CD8-positive, alpha-beta T cell (primary cell): ENCODE measurements at regions of chr7 and their contacts with region 1.

Region 1: GRCh38 chr7:108613112-108613759 is 43.6 kb downstream of the DNAJB9 start:
- DNase-seq: peak in 2 of 9 experiments; percentile 53 to 59
- ATAC-seq: peak; percentile 48
- H3K4me3 ChIP-seq: no peak overlapping the region
- H3K4me3 Mint-ChIP-seq: no peak overlapping the region
- H3K27ac ChIP-seq: no peak overlapping the region
- H3K27ac Mint-ChIP-seq: no peak overlapping the region
- H3K4me1 ChIP-seq: no peaks in the 10 kb centered on the region
- H3K4me1 Mint-ChIP-seq: no peaks in the 10 kb centered on the region
- H3K27me3 ChIP-seq: no peaks in the 10 kb centered on the region
- H3K27me3 Mint-ChIP-seq: no peaks in the 10 kb centered on the region
- CTCF ChIP-seq: peak; percentile 91

Region 2: GRCh38 chr7:108171151-108171550 is 442.1 kb before region 1 on chr7:
- CTCF ChIA-PET with region 1: no interaction called
- POLR2A ChIA-PET with region 1: no interaction called
- intact Hi-C with region 1: loop called in 1 of 2 experiments (anchors 5 kb)
- DNase-seq: no peak
- ATAC-seq: no peak
- H3K4me3 ChIP-seq: no peak overlapping the region
- H3K4me3 Mint-ChIP-seq: no peak overlapping the region
- H3K27ac ChIP-seq: no peak overlapping the region
- H3K27ac Mint-ChIP-seq: no peak overlapping the region
- H3K4me1 ChIP-seq: no peaks in the 10 kb centered on the region
- H3K4me1 Mint-ChIP-seq: no peaks in the 10 kb centered on the region
- H3K27me3 ChIP-seq: no peaks in the 10 kb centered on the region
- H3K27me3 Mint-ChIP-seq: peaks cover 2% of the 10 kb centered on the region
- CTCF ChIP-seq: no peak

Region 3: DNA sequence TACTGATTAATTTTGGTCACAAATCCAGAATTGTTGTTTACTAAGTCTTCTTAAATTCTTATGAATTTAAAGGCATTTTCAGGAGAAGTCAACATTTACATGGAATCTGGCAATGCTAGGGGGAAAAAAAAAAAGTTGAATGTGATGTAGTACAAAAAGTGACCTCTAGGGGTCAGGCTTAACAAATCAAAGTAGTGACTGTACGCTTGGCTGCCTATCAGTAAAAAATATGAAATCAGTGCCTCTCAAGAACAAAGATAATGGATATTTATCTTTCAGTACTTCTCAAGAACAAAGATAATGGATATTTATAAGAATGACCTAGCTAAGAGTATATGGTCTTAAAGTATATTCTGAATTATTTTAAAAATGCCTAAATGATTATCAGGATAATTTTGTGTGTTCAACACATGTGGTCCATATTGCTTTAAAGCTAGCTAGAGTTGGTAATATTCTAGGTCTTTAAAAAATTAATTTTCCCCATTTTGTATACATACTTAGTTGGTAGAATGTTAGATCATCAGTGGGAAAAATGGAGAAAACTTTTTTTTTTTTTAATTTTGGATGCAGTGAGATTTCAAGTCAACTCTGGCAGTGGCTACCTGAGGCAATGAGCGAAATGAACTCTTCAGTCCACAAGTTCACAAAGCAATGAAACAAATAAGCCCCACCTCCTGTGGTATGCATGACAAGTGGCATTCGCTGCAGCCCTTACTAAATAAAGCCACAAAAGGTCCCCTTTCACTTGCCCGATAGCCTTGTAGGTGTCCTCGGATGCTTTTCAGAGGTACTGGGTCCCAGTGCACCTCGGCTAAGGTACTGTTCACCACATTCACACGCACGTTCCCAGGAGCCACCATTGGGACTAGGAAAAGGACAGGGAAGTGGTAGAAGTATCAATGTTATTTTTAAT is 431.9 kb before region 1 on chr7:
- CTCF ChIA-PET with region 1: no interaction called
- POLR2A ChIA-PET with region 1: no interaction called
- intact Hi-C with region 1: loop called in 1 of 2 experiments (anchors 10 kb)
- DNase-seq: peak in 2 of 9 experiments; percentile 51 to 66
- ATAC-seq: peak; percentile 59
- H3K4me3 ChIP-seq: no peak overlapping the region
- H3K4me3 Mint-ChIP-seq: no peak overlapping the region
- H3K27ac ChIP-seq: no peak overlapping the region
- H3K27ac Mint-ChIP-seq: no peak overlapping the region
- H3K4me1 ChIP-seq: no peaks in the 10 kb centered on the region
- H3K4me1 Mint-ChIP-seq: no peaks in the 10 kb centered on the region
- H3K27me3 ChIP-seq: no peaks in the 10 kb centered on the region
- H3K27me3 Mint-ChIP-seq: no peaks in the 10 kb centered on the region
- CTCF ChIP-seq: peak; percentile 94

Region 4: DNA sequence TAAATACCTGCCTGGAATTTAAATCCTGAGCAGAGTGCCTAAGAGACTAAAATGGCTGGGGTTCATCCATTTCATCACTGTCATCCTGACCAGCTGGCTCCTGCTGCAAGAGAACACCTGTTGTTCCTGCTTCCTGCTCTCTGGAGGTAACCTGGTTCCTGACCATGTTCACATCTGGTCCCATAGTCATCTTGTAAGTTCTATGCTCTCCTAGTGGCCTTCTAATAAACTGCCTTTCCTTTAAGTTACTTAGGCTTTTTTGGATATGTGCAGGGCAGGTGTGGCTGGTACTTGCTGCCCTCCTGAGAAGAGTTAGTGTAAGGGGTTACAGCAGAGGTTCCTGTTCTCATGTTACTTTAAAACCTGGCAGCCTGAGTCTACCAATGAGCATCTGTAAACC is 237.0 kb before region 1 on chr7:
- CTCF ChIA-PET with region 1: no interaction called
- POLR2A ChIA-PET with region 1: no interaction called
- intact Hi-C with region 1: loop called in 1 of 2 experiments (anchors 5 kb)
- DNase-seq: no peak
- ATAC-seq: no peak
- H3K4me3 ChIP-seq: no peak overlapping the region
- H3K4me3 Mint-ChIP-seq: no peak overlapping the region
- H3K27ac ChIP-seq: no peak overlapping the region
- H3K27ac Mint-ChIP-seq: no peak overlapping the region
- H3K4me1 ChIP-seq: no peaks in the 10 kb centered on the region
- H3K4me1 Mint-ChIP-seq: peaks cover 4% of the 10 kb centered on the region
- H3K27me3 ChIP-seq: no peaks in the 10 kb centered on the region
- H3K27me3 Mint-ChIP-seq: no peaks in the 10 kb centered on the region
- CTCF ChIP-seq: no peak

Region 5: DNA sequence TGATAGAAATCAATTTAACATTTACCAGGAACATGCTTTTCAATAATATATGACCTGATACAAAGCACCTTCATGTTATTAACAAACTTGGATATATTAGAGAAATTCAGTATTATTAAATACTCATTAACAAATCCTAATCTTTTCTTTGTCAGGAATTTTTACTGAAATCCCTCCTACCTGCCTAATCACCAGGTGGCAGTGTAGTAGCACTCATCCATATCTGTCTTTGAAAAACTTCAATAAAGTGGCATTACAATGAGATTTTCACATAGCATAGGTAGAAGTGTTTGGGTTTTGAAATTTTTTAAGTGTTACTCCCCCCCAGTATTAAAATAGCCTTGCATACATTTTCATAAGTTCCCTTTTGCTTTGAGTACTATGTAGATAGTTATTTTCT is 1231.1 kb after region 1 on chr7:
- CTCF ChIA-PET with region 1: no interaction called
- POLR2A ChIA-PET with region 1: no interaction called
- intact Hi-C with region 1: loop called in 1 of 2 experiments (anchors 5 kb)
- DNase-seq: peak in 2 of 9 experiments; percentile 4 to 40
- ATAC-seq: no peak
- H3K4me3 ChIP-seq: no peak overlapping the region
- H3K4me3 Mint-ChIP-seq: no peak overlapping the region
- H3K27ac ChIP-seq: no peak overlapping the region
- H3K27ac Mint-ChIP-seq: no peak overlapping the region
- H3K4me1 ChIP-seq: no peaks in the 10 kb centered on the region
- H3K4me1 Mint-ChIP-seq: no peaks in the 10 kb centered on the region
- H3K27me3 ChIP-seq: no peaks in the 10 kb centered on the region
- H3K27me3 Mint-ChIP-seq: no peaks in the 10 kb centered on the region
- CTCF ChIP-seq: peak; percentile 22